B cell (primary cell): ENCODE measurements at regions of chr17 and their contacts with region 1.

Region 1: DNA sequence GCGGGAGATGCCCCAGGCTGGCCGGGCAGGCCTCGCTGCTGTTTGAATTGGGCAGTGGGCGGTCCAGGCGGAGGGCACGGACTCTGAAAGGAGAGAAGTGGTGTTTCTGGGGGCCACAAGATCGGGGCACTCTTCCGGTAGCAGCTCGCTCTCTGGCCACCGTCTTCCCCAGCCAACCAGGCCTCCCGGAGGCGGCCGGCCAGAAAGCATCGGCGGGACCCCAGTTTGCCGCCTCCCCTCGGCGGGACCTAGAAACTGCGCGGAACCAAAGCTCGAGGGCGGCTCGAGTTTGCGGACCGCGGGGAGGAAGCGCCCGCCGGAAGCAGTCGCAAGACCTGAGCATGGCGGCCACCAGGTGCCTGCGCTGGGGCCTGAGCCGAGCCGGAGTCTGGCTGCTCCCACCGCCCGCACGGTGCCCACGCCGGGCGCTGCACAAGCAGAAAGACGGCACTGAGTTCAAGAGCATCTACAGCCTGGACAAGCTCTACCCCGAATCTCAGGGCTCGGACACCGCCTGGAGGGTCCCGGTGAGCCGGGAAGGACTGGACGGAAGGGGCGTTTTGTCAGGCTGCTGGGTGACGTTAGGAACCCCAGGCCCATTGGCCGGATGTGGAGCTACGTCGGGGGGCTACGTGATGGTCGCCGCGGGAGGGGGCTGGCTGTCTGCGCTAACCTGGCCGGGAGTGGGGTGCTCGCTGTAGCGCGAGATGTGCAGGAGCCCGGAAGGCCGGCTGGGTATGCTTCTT is at the start of gene MRPL58:
- DNase-seq: peak; percentile 89
- ATAC-seq: peak; percentile 95
- H3K4me3 ChIP-seq: peak within 1 kb of the TSS; percentile 46 to 86 (median 76)
- H3K4me3 Mint-ChIP-seq: peak within 1 kb of the TSS; percentile 97
- H3K27ac ChIP-seq: peak within 1 kb of the TSS; percentile 30 to 79
- H3K27ac Mint-ChIP-seq: peak within 1 kb of the TSS; percentile 92
- H3K4me1 ChIP-seq: peaks cover 15 to 16% of the 10 kb centered on the region in 2 donors
- H3K4me1 Mint-ChIP-seq: peaks cover 22% of the 10 kb centered on the region
- H3K27me3 ChIP-seq: peaks cover 0 to 4% (median 0%) of the 10 kb centered on the region in 4 experiments
- H3K27me3 Mint-ChIP-seq: no peaks in the 10 kb centered on the region
- CTCF ChIP-seq: peak; percentile 73
- total RNA-seq, gene MRPL58: 20.8 and 23.3 TPM in 2 replicates

Region 2: DNA sequence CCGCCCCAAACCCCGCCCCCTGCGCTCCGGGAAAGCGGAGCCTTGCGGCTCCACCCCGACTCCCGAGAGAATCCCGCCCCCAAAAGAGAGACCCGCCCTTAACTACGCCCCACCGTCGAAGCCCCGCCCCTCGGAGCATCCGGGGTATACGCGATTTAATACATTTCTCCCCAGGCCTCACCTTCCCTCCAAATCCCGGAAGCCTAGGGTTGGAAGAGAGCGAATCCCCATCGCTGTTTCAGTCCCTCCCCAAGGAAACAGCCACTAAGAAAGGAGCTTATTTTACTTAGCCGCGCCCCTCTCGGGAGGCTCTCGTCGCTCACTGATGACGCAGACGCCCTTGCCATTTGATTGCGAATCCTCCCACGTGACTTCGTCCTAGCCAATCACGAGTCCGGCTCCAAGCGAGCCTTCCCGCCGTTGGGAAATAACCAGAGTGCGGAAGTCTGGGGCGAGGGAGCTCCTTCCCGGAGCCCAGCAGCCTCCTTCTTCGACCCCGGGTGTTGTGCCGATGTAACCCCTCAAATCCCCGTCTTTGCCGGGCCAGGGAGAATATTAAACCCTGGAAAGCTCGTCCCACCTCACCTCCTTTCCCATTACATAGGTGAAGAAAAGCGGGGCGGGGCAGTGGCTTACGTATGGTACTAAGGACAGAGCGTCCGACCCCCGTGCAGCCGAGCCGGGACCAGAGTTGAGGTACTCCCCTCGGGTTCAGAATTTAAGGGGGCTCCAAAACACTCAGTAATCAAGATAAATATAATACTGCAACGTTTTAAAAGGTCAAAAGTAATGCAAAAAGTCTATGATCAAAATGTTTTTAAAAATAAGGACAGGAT is 139.3 kb before region 1 on chr17:
- CTCF ChIA-PET with region 1: no interaction called
- POLR2A ChIA-PET with region 1: no interaction called
- intact Hi-C with region 1: loop called (anchors 1 kb)
- DNase-seq: peak; percentile 100
- ATAC-seq: peak; percentile 93
- H3K4me3 ChIP-seq: peak overlapping the region; percentile 78 to 91 (median 86)
- H3K4me3 Mint-ChIP-seq: peak overlapping the region; percentile 81
- H3K27ac ChIP-seq: peak overlapping the region; percentile 95 to 96
- H3K27ac Mint-ChIP-seq: peak overlapping the region; percentile 94
- H3K4me1 ChIP-seq: peaks cover 12 to 15% of the 10 kb centered on the region in 2 donors
- H3K4me1 Mint-ChIP-seq: peaks cover 12% of the 10 kb centered on the region
- H3K27me3 ChIP-seq: no peaks in the 10 kb centered on the region
- H3K27me3 Mint-ChIP-seq: no peaks in the 10 kb centered on the region
- CTCF ChIP-seq: no peak

Region 3: GRCh38 chr17:74930535-74931036 is 81.9 kb before region 1 on chr17:
- CTCF ChIA-PET with region 1: no interaction called
- POLR2A ChIA-PET with region 1: no interaction called
- intact Hi-C with region 1: no loop called
- DNase-seq: no peak
- ATAC-seq: no peak
- H3K4me3 ChIP-seq: no peak overlapping the region
- H3K4me3 Mint-ChIP-seq: no peak overlapping the region
- H3K27ac ChIP-seq: no peak overlapping the region
- H3K27ac Mint-ChIP-seq: no peak overlapping the region
- H3K4me1 ChIP-seq: no peaks in the 10 kb centered on the region
- H3K4me1 Mint-ChIP-seq: no peaks in the 10 kb centered on the region
- H3K27me3 ChIP-seq: peaks cover 0 to 43% (median 7%) of the 10 kb centered on the region in 4 experiments
- H3K27me3 Mint-ChIP-seq: peaks cover 64% of the 10 kb centered on the region
- CTCF ChIP-seq: no peak

Region 4: DNA sequence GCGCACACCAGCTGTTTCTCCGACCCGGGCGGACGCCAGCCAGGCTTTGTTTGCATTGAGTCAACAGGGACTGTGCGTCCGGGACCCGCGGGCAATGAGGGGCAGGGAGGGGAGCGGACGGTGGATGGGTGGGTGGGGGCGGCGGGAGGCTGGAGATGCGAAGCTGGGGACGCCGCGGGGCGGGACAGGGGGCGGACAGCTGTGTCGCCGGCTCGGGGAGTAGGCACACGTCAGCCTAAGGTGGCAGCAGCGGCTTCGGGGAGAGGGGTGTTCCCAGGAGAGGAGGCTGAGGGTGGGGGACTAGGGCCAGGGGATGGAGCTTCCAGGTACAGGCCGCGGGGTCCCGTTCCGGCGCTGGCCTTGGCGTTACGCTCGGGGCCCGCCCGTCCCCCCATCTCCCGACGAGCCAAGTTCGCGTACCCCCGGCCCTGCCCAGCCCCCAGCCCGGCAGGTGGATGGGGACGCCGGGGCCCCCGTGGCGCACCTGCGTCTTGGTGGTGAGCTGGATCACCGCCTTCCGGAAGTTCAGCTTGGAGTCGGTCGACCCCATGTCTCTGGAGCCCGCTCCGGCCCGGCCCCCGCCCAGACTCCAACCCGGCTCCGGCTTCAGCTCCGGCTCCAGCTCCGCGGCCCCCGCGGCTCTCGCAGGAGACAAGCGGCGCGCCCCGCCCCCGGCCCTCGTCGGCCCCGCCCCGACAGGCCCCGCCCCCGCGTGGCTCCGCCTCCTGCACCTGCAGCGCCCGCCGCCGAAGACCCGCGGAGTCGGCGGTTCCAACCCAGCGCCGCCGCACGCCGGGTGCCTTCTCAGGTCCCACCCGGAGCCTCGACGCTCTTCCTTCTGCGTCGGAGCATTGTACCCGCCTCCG is 40.2 kb before region 1 on chr17 and contains the start of gene HID1:
- CTCF ChIA-PET with region 1: interaction called, 14 read pairs
- POLR2A ChIA-PET with region 1: interaction called, 4 read pairs
- intact Hi-C with region 1: loop called (anchors 1 kb)
- DNase-seq: peak; percentile 84
- ATAC-seq: peak; percentile 93
- H3K4me3 ChIP-seq: peak within 1 kb of the TSS in 4 of 5 experiments; percentile 42 to 66 (median 57)
- H3K4me3 Mint-ChIP-seq: peak within 1 kb of the TSS; percentile 86
- H3K27ac ChIP-seq: no peak within 1 kb of the TSS
- H3K27ac Mint-ChIP-seq: peak within 1 kb of the TSS; percentile 46
- H3K4me1 ChIP-seq: peaks cover 13 to 16% of the 10 kb centered on the region in 2 donors
- H3K4me1 Mint-ChIP-seq: peaks cover 9% of the 10 kb centered on the region
- H3K27me3 ChIP-seq: peaks cover 0 to 48% (median 12%) of the 10 kb centered on the region in 4 experiments
- H3K27me3 Mint-ChIP-seq: peaks cover 24% of the 10 kb centered on the region
- CTCF ChIP-seq: no peak
- total RNA-seq, gene HID1: 1.7 and 3.9 TPM in 2 replicates

Region 5: DNA sequence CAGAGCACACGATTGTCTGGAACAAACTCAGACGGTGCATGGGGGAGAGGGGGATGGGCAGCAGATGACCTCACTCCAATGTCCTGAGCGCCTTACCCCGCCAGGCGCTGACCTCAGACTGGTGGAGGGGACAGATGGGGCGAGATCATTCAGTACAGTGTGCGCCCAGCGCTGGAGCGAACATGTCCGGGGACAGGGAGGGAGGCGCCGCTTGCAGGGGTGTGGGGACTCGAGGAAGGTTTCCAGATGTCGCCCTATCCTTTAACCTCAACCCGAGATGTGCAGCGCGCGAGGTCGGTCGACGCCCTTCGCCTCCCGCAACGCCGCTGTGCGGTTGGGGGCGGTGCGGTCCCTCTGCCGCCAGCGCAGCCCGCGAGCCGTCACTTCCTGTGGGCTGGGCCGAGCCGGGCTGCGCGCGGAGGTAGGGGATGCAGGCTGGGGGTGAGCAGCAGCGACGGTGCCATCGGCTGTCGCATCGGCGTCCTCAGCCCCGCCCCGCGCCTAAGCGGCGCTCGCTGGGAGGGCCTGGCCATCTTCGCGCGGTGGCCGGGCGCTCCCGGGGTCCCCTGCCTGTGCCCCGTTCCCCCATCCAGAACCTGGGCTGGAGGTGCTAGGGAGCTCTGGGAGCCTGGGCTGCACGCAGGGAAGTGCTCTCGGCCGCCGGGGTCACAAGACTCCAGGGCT is 30.4 kb before region 1 on chr17:
- CTCF ChIA-PET with region 1: interaction called, 13 read pairs
- POLR2A ChIA-PET with region 1: interaction called, 3 read pairs
- intact Hi-C with region 1: loop called (anchors 1 kb)
- DNase-seq: peak; percentile 81
- ATAC-seq: peak; percentile 94
- H3K4me3 ChIP-seq: peak overlapping the region; percentile 60 to 73 (median 63)
- H3K4me3 Mint-ChIP-seq: peak overlapping the region; percentile 94
- H3K27ac ChIP-seq: no peak overlapping the region
- H3K27ac Mint-ChIP-seq: peak overlapping the region; percentile 76
- H3K4me1 ChIP-seq: peaks cover 16 to 23% of the 10 kb centered on the region in 2 donors
- H3K4me1 Mint-ChIP-seq: peaks cover 15% of the 10 kb centered on the region
- H3K27me3 ChIP-seq: peaks cover 0 to 55% (median 13%) of the 10 kb centered on the region in 4 experiments
- H3K27me3 Mint-ChIP-seq: peaks cover 24% of the 10 kb centered on the region
- CTCF ChIP-seq: no peak

Region 6: DNA sequence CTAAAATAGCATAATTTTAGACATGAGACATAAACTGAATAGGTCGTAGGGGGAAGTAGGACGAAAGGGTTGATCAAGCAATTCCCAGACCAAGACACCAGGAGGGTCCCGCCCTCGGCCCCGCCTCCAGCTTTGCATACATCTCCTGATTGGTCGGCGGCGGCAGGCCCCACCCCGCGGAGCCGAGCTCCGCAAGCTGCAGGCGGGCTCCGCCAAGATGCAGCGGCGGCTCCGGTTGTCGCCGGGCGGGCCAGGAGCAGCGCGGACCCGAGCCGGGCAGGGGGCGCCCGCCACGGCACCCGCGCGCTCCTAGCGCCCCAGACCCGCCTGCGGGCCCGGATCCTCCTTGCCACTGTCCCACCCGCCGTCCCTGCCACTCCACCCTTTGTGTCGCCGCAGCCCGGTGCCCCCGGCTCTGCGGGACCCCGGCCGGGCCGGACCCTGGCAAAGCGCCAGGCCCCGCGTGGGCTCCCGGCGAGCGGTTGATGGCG is 25.1 kb before region 1 on chr17 and contains the start of gene CDR2L:
- CTCF ChIA-PET with region 1: interaction called, 13 read pairs
- POLR2A ChIA-PET with region 1: interaction called, 7 read pairs
- intact Hi-C with region 1: loop called (anchors 1 kb)
- DNase-seq: peak; percentile 95
- ATAC-seq: peak; percentile 99
- H3K4me3 ChIP-seq: peak within 1 kb of the TSS in 4 of 5 experiments; percentile 40 to 67 (median 53)
- H3K4me3 Mint-ChIP-seq: peak within 1 kb of the TSS; percentile 92
- H3K27ac ChIP-seq: no peak within 1 kb of the TSS
- H3K27ac Mint-ChIP-seq: peak within 1 kb of the TSS; percentile 53
- H3K4me1 ChIP-seq: peaks cover 16 to 20% of the 10 kb centered on the region in 2 donors
- H3K4me1 Mint-ChIP-seq: peaks cover 12% of the 10 kb centered on the region
- H3K27me3 ChIP-seq: peaks cover 0 to 41% (median 16%) of the 10 kb centered on the region in 4 experiments
- H3K27me3 Mint-ChIP-seq: peaks cover 16% of the 10 kb centered on the region
- CTCF ChIP-seq: no peak
- total RNA-seq, gene CDR2L: not detected in 2 replicates

Region 7: GRCh38 chr17:75034236-75034908 is 21.9 kb after region 1 on chr17:
- CTCF ChIA-PET with region 1: interaction called, 11 read pairs
- POLR2A ChIA-PET with region 1: interaction called, 6 read pairs
- intact Hi-C with region 1: loop called (anchors 1 kb)
- DNase-seq: peak; percentile 87
- ATAC-seq: peak; percentile 70
- H3K4me3 ChIP-seq: peak overlapping the region; percentile 59 to 81 (median 71)
- H3K4me3 Mint-ChIP-seq: peak overlapping the region; percentile 99
- H3K27ac ChIP-seq: peak overlapping the region in 1 of 2 donors; percentile 69
- H3K27ac Mint-ChIP-seq: peak overlapping the region; percentile 97
- H3K4me1 ChIP-seq: peaks cover 15 to 34% of the 10 kb centered on the region in 2 donors
- H3K4me1 Mint-ChIP-seq: peaks cover 34% of the 10 kb centered on the region
- H3K27me3 ChIP-seq: no peaks in the 10 kb centered on the region
- H3K27me3 Mint-ChIP-seq: no peaks in the 10 kb centered on the region
- CTCF ChIP-seq: no peak

Region 8: GRCh38 chr17:75046582-75047289 is 34.2 kb after region 1 on chr17 and contains the starts of genes ATP5PD and KCTD2:
- CTCF ChIA-PET with region 1: interaction called, 3 read pairs
- POLR2A ChIA-PET with region 1: interaction called, 5 read pairs
- intact Hi-C with region 1: loop called (anchors 1 kb)
- DNase-seq: peak; percentile 96
- ATAC-seq: peak; percentile 97
- H3K4me3 ChIP-seq: peak within 1 kb of the TSS; percentile 77 to 97 (median 89)
- H3K4me3 Mint-ChIP-seq: peak within 1 kb of the TSS; percentile 96
- H3K27ac ChIP-seq: peak within 1 kb of the TSS; percentile 46 to 89
- H3K27ac Mint-ChIP-seq: peak within 1 kb of the TSS; percentile 94
- H3K4me1 ChIP-seq: peaks cover 13 to 16% of the 10 kb centered on the region in 2 donors
- H3K4me1 Mint-ChIP-seq: peaks cover 27% of the 10 kb centered on the region
- H3K27me3 ChIP-seq: no peaks in the 10 kb centered on the region
- H3K27me3 Mint-ChIP-seq: no peaks in the 10 kb centered on the region
- CTCF ChIP-seq: no peak
- total RNA-seq, gene ATP5PD: 98.8 and 101 TPM in 2 replicates
- total RNA-seq, gene KCTD2: 23.2 and 24.6 TPM in 2 replicates